T-cell (primary cell): ENCODE measurements at regions of chr1 and their contacts with region 1.

Region 1: DNA sequence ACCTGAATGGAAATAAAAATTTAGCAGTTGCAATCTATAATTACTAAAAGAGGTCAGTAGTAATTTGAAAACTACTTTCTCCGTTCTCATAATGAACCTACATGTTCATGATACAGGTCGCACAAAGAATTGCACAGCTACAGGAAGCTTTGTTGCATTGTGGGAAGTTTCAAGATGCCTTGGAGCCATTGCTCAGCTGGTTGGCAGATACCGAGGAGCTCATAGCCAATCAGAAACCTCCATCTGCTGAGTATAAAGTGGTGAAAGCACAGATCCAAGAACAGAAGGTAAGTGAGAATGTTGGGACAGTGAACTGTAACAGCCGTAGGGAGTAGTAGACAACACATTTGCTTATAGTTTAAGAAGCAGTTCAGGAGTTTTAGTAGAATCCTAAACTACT is 68.8 kb upstream of the BMP8A start:
- DNase-seq: no peak
- ATAC-seq: no peak
- H3K4me3 ChIP-seq: no peak overlapping the region
- H3K4me3 Mint-ChIP-seq: no peak overlapping the region
- H3K27ac ChIP-seq: no peak overlapping the region
- H3K27ac Mint-ChIP-seq: no peak overlapping the region
- H3K4me1 ChIP-seq: no peaks in the 10 kb centered on the region
- H3K4me1 Mint-ChIP-seq: peaks cover 15 to 19% (median 17%) of the 10 kb centered on the region in 3 donors
- H3K27me3 ChIP-seq: no peaks in the 10 kb centered on the region
- H3K27me3 Mint-ChIP-seq: no peaks in the 10 kb centered on the region

Region 2: DNA sequence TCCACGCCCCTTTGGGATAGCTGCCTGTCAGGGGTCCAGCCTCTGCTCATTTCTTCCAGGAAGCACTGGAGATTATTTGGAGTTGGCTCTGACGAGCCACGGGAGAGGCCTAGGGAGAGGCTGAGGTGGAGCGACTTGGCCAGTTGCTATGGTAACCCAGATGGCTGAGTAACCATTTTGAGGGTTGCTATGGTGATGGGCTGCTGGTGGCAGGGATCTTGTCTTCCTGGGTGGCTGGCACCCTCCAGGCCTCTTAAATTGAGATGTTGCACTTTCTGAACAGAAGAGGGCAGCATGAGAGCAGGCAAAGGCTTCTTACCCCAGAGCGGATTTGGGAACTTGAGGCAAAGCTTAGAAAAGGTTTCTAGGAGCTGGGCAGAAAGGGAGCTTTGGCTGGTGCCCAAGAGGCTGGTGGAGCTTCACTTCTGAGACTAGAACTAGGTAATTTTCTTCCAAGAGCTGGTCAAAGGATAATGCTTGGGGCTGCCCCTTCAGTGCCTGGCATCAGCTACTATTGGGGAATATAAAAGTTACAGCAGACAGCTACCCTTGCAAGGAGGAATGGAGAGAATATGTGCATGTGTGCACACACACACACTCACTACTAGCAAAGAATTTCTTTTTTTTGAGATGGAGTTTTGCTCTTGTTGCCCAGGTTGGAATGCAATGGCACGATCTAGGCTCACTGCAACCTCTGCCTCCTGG is 323.9 kb before region 1 on chr1:
- CTCF ChIA-PET with region 1: no interaction called
- POLR2A ChIA-PET with region 1: no interaction called
- DNase-seq: peak in 33 of 35 experiments; percentile 29 to 84 (median 51)
- ATAC-seq: peak; percentile 71 to 82 (median 78)
- H3K4me3 ChIP-seq: no peak overlapping the region
- H3K4me3 Mint-ChIP-seq: no peak overlapping the region
- H3K27ac ChIP-seq: no peak overlapping the region
- H3K27ac Mint-ChIP-seq: peak overlapping the region; percentile 11 to 25
- H3K4me1 ChIP-seq: peaks cover 7 to 13% of the 10 kb centered on the region in 2 experiments
- H3K4me1 Mint-ChIP-seq: peaks cover 23 to 25% (median 24%) of the 10 kb centered on the region in 3 donors
- H3K27me3 ChIP-seq: no peaks in the 10 kb centered on the region
- H3K27me3 Mint-ChIP-seq: no peaks in the 10 kb centered on the region

Region 3: DNA sequence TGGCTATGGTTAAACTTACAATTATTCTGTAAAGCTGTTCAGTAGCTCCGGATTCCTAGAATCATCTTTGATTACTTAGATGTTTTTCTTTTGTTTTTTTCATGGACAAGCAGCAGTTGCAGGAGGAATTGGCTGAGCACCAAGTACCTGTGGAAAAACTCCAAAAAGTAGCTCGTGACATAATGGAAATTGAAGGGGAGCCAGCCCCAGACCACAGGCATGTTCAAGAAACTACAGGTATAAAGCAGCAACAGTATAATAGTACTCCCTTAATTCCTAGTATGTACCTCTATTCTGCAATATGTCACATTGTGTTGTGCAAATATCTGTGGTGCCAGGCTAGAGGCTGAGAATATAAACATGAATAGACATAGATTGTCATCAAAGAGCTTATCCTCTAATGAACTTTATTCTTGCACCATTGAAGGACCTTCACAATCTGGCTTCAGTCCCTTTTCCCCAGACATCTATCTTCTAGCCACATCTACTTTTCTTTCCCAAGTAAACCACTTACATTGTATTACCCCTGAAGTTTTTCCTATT is 63.5 kb before region 1 on chr1:
- CTCF ChIA-PET with region 1: no interaction called
- POLR2A ChIA-PET with region 1: no interaction called
- DNase-seq: no peak
- ATAC-seq: no peak
- H3K4me3 ChIP-seq: no peak overlapping the region
- H3K4me3 Mint-ChIP-seq: no peak overlapping the region
- H3K27ac ChIP-seq: no peak overlapping the region
- H3K27ac Mint-ChIP-seq: no peak overlapping the region
- H3K4me1 ChIP-seq: no peaks in the 10 kb centered on the region
- H3K4me1 Mint-ChIP-seq: no peaks in the 10 kb centered on the region
- H3K27me3 ChIP-seq: no peaks in the 10 kb centered on the region
- H3K27me3 Mint-ChIP-seq: no peaks in the 10 kb centered on the region

Region 4: GRCh38 chr1:39398278-39399021 is 24.2 kb before region 1 on chr1:
- CTCF ChIA-PET with region 1: interaction called in 1 of 2 experiments, 3 read pairs
- POLR2A ChIA-PET with region 1: interaction called in 1 of 2 experiments, 15 read pairs
- DNase-seq: peak in 3 of 35 experiments; percentile 10 to 15 (median 13)
- ATAC-seq: peak; percentile 10 to 52 (median 44)
- H3K4me3 ChIP-seq: peak overlapping the region in 1 of 2 donors; percentile 10
- H3K4me3 Mint-ChIP-seq: peak overlapping the region in 2 of 3 donors; percentile 9 to 58
- H3K27ac ChIP-seq: no peak overlapping the region
- H3K27ac Mint-ChIP-seq: peak overlapping the region; percentile 69 to 79
- H3K4me1 ChIP-seq: peaks cover 9 to 24% of the 10 kb centered on the region in 2 experiments
- H3K4me1 Mint-ChIP-seq: peaks cover 65 to 70% (median 70%) of the 10 kb centered on the region in 3 donors
- H3K27me3 ChIP-seq: no peaks in the 10 kb centered on the region
- H3K27me3 Mint-ChIP-seq: no peaks in the 10 kb centered on the region